Posterior cingulate gyrus (tissue), 11 donors: ENCODE measurements at regions of chr21 and their contacts with region 1.

Region 1: DNA sequence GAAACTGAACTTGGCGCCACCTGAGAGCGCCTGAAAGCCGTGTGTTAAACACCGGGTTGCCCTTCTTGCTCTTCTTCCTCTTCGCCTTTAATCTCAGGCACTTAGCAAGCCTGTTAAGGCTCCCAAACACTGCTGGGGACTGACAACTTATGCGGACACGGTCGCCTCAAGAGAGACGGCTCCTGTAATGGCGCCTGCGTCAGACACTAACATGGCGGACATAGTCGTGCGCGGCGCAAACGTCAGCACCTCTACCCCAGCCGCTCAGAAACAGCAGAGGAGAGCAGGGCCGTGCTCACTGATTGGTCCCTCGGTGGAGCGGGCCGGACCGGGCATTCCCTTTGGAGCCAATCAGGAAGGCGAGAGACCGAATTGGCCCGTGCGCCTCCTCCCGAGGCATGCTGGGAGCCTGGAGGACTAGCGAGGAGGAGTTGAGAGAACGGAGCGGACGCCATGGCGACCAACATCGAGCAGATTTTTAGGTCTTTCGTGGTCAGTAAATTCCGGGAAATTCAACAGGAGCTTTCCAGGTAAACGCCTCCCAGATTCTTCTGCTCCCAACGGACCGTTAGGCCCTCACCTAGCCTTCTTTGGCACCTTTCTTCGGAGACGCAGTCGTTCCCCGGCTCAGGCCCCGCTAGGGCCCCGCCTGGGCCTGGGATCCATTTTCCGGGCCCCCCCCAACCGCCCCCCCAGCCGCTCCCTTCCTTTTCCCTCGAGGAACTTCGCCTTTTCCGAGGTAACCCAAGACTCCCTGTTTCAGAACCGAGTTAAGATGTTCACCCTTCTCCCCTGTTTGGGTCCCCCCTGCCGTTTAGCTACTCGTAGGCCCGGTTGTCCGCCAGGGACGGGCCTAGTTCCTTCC is at the start of gene SON:
- DNase-seq: peak; percentile 99 to 100 (median 100)

Region 2: DNA sequence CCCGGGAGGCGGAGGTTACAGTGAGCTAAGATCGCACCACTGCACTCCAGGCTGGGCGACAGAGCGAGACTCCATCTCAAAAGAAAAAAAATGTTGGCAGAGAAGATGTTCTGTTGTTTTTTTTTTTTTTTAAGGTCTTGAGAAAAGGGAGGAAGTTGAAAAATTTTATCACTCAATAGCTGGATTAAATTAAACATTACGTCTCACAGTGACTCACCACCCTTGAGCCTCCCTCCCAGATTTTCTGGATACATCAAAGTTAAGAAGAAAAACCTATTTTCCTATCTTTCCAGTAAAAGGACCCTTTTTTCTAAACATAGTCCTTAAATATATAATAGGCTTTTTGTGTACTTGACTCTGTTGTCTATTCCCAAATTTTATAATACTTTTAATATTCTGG is 182.6 kb before region 1 on chr21:
- intact Hi-C with region 1: no loop called
- DNase-seq: no peak

Region 3: GRCh38 chr21:33479679-33480480 is 63.0 kb before region 1 on chr21 and contains the start of gene TMEM50B:
- intact Hi-C with region 1: loop called (anchors 2 kb)
- DNase-seq: peak; percentile 91 to 100 (median 96)

Region 4: DNA sequence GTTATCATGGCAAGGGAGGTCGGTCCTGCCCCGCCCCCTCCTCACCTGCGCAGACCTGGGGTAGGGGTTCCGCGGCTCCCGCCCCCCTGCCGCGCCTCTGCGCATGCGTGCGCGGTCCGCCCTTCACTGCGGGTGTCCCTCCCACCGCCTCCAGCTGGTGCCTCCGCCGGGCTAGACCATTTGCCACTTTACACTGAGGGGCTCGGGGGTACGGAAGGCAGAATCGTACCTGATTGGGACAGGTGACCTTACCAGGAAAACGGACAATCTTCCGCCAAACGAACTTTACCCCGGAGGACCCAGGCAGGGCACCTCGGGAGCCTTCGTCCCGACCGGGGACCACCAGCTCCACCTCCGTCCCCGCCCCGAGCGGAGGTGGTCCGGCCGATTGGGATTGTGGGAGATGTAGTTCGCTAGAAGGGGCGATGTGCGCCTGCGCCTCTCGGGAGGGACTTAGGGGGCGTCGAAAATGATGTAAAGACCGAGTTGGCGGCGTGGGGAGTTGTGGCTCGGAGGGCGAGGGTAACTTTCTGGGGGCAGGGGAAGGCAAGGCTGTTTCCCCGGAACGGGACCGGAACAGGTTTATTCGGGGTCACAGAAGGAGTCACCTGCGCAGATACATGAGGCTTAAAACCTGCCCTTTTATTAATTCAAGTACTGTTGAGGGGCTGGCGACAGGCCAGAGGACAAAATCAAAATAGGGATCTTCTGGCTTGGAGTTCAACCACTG is 51.3 kb before region 1 on chr21 and contains the start of gene DNAJC28:
- intact Hi-C with region 1: loop called (anchors 5 kb)
- DNase-seq: peak; percentile 92 to 99 (median 94)

Region 5: DNA sequence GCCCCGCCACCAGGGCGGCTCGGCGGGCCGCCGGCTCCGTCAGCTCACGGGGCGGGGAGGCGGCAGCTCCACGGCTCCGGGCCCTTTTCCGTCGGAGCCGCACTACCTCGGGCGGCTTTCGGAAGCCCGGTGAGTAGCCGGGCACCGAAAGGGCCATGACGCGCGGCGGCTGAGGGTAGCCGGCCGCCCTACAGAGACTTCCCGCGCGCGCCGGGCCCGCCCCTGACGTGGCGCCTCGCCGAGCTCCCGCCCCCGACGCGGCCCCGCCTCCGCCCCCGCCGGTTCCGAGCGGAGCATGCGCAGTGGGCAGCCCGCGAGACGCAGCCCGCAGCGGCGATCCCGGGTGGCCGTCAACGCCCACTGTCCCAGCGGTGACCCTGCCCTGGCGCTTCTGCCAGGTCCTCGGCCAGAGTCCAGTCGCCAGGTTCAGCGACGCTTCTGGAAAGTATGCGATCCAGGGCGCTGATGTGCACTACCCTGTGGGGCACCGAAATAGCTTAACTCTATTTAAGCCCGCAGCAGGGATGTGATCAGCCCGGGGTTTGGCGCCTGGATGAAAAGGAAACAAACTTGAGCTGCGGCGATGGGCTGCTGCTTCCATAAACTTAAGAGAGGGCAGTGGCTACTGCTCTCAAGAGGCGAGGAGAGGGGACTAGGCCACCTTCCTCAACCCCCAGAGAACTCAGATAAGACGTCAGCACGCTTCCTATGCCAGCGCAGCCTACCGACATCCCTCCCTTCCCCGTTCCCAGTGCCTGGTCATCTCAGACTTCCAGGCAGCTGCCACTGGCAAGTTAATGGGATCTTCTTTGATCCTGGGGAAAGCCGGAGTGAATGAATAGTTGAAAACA is 45.8 kb after region 1 on chr21 and contains the start of gene DONSON:
- intact Hi-C with region 1: loop called (anchors 5 kb)
- DNase-seq: peak; percentile 78 to 98 (median 85)

Region 6: GRCh38 chr21:33641336-33642026 is 98.6 kb after region 1 on chr21 and contains the start of gene CRYZL1:
- intact Hi-C with region 1: no loop called
- DNase-seq: peak; percentile 100

Region 7: GRCh38 chr21:35457097-35457804 is 1914.4 kb after region 1 on chr21:
- intact Hi-C with region 1: no loop called
- DNase-seq: no peak